Gastrocnemius medialis (tissue), 4 donors: ENCODE measurements at regions of chr10 and their contacts with region 1.

Region 1: DNA sequence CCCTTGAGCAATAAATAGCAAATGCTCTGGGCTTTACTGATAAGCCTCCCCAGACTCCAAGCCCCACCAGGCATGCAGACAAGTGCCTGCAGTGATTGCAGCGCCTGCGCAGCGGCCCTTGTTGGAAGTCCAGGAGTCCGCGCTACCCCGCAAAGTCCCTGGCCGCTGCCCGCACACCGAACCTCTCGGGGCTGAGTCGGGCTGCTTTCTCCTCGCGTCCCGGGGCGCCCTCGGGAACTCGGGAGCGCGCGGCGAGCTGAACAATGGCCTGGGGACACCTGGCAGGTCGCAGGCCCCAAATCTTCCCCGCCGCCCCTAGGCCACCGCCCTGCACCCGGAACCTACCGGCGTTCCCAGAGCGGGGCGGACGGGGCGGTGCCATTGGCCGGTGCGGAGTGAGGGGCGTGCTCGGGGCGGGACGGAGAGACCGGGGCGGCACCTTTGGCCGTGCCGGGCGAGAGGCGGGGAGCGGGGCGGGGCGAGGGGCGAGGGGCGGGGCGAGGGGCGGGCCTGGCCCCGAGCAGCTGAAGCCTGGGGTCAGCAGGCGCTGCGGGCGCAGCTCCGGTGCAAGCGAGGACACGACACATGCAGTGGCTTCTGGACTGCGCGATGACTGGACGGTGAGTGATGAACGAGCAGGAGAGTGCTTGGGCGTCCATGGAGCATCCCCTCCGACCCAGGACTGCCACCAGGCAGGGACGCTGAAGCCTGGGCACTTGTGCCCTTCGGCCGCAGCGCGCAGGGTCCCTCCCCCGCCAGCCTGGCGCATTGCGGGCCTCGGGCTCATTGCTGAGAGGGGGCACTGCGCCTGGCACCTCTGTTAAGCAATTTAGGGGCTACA is at the start of gene RASSF4:
- DNase-seq: peak; percentile 93 to 94
- ATAC-seq: peak; percentile 52 to 57
- H3K4me3 ChIP-seq: peak within 1 kb of the TSS; percentile 72 to 89 (median 86)
- H3K27ac ChIP-seq: peak within 1 kb of the TSS; percentile 92 to 97 (median 95)
- H3K4me1 ChIP-seq: peaks cover 55 to 61% of the 10 kb centered on the region in 2 donors
- H3K27me3 ChIP-seq: no peaks in the 10 kb centered on the region
- CTCF ChIP-seq: peak in 1 of 5 experiments; percentile 23
- POLR2A ChIP-seq: peak; percentile 84 to 92
- total RNA-seq, gene RASSF4: 9.4 to 39.7 (median 24.0) TPM

Region 2: DNA sequence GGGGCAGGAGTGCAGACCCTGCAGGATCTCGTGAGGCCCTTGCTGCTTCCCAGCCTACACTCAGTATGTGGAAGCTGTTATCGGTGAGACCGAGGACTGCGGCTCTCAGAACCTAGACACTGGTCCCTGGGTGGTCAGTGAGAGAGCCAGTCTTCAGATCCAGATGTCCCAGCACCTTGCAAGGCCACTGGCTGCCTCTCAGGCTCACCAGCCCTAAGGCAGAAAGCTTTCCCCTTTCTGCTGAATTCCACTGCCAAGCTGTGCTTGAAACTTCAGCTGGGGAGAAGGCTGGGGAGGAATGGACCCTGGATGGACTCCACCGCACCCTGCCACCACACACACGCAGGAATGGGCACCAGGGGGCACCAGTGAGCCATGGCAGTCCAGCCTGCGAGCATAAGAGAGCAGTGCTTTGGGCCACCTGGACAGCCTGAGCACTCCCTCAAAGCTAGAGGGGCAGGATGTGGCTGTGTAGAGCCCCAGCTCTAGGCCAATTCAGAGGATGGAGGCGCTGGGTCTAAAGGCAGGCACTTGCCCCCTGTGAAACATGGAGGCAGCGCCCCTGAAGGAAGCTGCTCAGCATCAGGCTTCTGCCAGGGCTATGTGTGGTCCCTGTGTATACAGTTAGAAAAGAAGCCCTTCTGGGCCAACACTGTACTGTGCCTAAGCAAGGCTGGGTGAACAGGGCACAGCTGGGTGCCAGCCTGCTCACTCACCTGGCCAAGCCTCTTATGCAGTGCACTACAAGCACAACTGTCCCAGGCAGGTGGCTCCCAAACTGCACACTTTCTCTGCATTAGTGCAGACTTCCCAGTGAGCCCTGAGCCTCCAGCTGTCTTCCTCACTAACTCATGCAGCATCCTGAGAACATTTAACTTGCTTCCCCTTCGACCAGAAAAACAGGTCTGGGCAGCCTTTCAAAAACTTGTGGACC is 26.7 kb before region 1 on chr10:
- in situ Hi-C with region 1: no loop called
- intact Hi-C with region 1: loop called (anchors 1 kb)
- DNase-seq: peak; percentile 79 to 85
- ATAC-seq: peak; percentile 94
- H3K4me3 ChIP-seq: no peak overlapping the region
- H3K27ac ChIP-seq: no peak overlapping the region
- H3K4me1 ChIP-seq: peaks cover 16 to 19% of the 10 kb centered on the region in 2 donors
- H3K27me3 ChIP-seq: no peaks in the 10 kb centered on the region
- CTCF ChIP-seq: peak; percentile 94 to 99 (median 98)
- POLR2A ChIP-seq: no peak